Right ventricle myocardium inferior (tissue), 1 donor: ENCODE measurements at regions of chr6 and their contacts with region 1.

Region 1: GRCh38 chr6:2971420-2972218 is at the start of gene SERPINB6:
- DNase-seq: peak; percentile 92
- ATAC-seq: peak; percentile 92
- total RNA-seq, gene SERPINB6: 275 TPM

Region 2: GRCh38 chr6:2952557-2953095 is 19.0 kb before region 1 on chr6:
- intact Hi-C with region 1: loop called (anchors 2 kb)
- DNase-seq: peak; percentile 89
- ATAC-seq: peak; percentile 62